Activated naive CD8-positive, alpha-beta T cell treated with anti-CD3 and anti-CD28 coated beads, Interleukin-2, amount 10 ng/mL, durations not matched to agents 7 days and 5 days (primary cell): ENCODE measurements at regions of chr12 and their contacts with region 1.

Region 1: GRCh38 chr12:69239352-69239921 is at the start of gene CPSF6:
- DNase-seq: peak; percentile 98
- ATAC-seq: peak; percentile 91
- H3K4me3 Mint-ChIP-seq: peak within 1 kb of the TSS; percentile 97
- H3K27ac Mint-ChIP-seq: peak within 1 kb of the TSS; percentile 99
- H3K4me1 Mint-ChIP-seq: peaks cover 39% of the 10 kb centered on the region
- H3K27me3 Mint-ChIP-seq: no peaks in the 10 kb centered on the region
- total RNA-seq, gene CPSF6: 104 to 107 TPM

Region 2: GRCh38 chr12:69254046-69254445 is 14.6 kb after region 1 on chr12:
- POLR2A ChIA-PET with region 1: interaction called, 14 read pairs
- DNase-seq: no peak
- ATAC-seq: peak; percentile 80
- H3K4me3 Mint-ChIP-seq: no peak overlapping the region
- H3K27ac Mint-ChIP-seq: peak overlapping the region; percentile 33
- H3K4me1 Mint-ChIP-seq: peaks cover 27% of the 10 kb centered on the region
- H3K27me3 Mint-ChIP-seq: no peaks in the 10 kb centered on the region